Esophagus muscularis mucosa (tissue), 4 donors: ENCODE measurements at regions of chr18 and their contacts with region 1.

Region 1: DNA sequence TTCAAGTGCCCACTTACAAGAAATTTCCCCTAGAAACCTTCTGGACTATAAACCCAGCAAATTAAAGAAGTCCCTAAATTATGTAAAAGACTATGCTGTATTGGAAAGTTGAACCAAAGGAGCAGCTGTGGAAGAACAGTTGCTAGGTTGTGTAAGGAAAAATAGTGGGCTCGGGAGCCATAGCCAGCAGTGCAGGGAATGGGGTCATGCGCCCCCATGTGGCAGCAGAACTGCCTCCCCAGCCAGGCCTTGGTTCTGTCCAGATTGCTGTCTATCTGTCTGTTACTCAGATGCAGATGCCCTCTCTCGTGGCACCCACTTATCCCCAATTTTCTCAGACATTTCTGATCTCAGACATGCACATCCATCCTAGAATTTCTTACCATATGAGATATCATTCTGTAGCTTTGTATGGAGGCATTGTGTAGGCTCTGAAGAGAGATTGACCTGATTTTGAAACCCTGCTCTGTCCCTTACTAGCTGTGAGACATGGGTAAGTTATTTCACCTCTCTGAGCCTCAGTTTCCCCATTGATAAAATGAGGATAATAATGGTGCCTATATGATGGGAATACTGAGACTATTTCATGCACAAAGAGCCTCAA is 258.3 kb downstream of the SS18 start:
- DNase-seq: no peak
- H3K4me3 ChIP-seq: no peak overlapping the region
- H3K27ac ChIP-seq: no peak overlapping the region
- H3K4me1 ChIP-seq: peaks cover 0 to 12% (median 4%) of the 10 kb centered on the region in 4 donors
- H3K27me3 ChIP-seq: no peaks in the 10 kb centered on the region
- CTCF ChIP-seq: peak; percentile 16 to 51 (median 44)
- EP300 ChIP-seq: no peak
- POLR2A ChIP-seq: no peak

Region 2: GRCh38 chr18:24878289-24878688 is 953.8 kb before region 1 on chr18:
- intact Hi-C with region 1: loop called (anchors 10 kb)
- DNase-seq: no peak
- H3K4me3 ChIP-seq: no peak overlapping the region
- H3K27ac ChIP-seq: no peak overlapping the region
- H3K4me1 ChIP-seq: no peaks in the 10 kb centered on the region
- H3K27me3 ChIP-seq: peaks cover 0 to 15% (median 0%) of the 10 kb centered on the region in 4 donors
- CTCF ChIP-seq: peak; percentile 26 to 36 (median 28)
- EP300 ChIP-seq: no peak
- POLR2A ChIP-seq: no peak

Region 3: GRCh38 chr18:25764777-25765176 is 67.3 kb before region 1 on chr18:
- intact Hi-C with region 1: loop called (anchors 10 kb)
- DNase-seq: no peak
- H3K4me3 ChIP-seq: no peak overlapping the region
- H3K27ac ChIP-seq: no peak overlapping the region
- H3K4me1 ChIP-seq: no peaks in the 10 kb centered on the region
- H3K27me3 ChIP-seq: no peaks in the 10 kb centered on the region
- CTCF ChIP-seq: no peak
- EP300 ChIP-seq: no peak
- POLR2A ChIP-seq: no peak